Body of pancreas (tissue), 4 donors: ENCODE measurements at regions of chr16 and their contacts with region 1.

Region 1: DNA sequence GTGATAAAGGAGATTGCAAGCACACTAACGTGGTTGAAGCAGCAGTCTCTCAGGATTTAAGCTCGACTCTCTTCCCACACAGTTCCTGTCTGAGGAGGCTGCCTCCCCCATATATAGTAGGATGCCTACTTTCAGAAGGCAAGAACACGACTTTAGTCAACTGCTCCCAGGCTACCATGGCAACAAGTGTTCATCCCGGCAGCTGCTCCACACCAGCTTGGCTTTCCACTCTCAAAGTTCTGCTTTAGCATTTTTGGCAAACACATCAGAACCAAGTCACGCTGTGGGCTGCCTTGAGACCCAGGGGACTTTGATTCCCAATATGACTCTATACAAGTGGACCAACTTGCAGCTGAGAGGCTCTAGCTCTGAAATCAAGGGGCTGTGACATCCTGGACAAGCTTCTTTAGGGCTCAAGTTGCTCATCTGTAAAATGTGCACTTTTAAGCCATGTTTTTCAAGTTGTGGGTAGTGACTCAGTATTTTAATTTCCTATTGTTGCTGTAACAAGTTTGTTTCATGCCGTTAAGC is 16.5 kb downstream of the ZP2 start:
- DNase-seq: no peak
- ATAC-seq: no peak
- H3K4me3 ChIP-seq: no peak overlapping the region
- H3K27ac ChIP-seq: no peak overlapping the region
- H3K4me1 ChIP-seq: no peaks in the 10 kb centered on the region
- H3K27me3 ChIP-seq: no peaks in the 10 kb centered on the region
- CTCF ChIP-seq: no peak
- POLR2A ChIP-seq: no peak

Region 2: GRCh38 chr16:20336955-20337354 is 857.9 kb before region 1 on chr16:
- intact Hi-C with region 1: no loop called
- DNase-seq: peak in 3 of 4 donors; percentile 48 to 61 (median 55)
- ATAC-seq: no peak
- H3K4me3 ChIP-seq: no peak overlapping the region
- H3K27ac ChIP-seq: peak overlapping the region; percentile 39 to 59 (median 48)
- H3K4me1 ChIP-seq: peaks cover 58% of the 10 kb centered on the region
- H3K27me3 ChIP-seq: no peaks in the 10 kb centered on the region
- CTCF ChIP-seq: no peak
- POLR2A ChIP-seq: no peak

Region 3: DNA sequence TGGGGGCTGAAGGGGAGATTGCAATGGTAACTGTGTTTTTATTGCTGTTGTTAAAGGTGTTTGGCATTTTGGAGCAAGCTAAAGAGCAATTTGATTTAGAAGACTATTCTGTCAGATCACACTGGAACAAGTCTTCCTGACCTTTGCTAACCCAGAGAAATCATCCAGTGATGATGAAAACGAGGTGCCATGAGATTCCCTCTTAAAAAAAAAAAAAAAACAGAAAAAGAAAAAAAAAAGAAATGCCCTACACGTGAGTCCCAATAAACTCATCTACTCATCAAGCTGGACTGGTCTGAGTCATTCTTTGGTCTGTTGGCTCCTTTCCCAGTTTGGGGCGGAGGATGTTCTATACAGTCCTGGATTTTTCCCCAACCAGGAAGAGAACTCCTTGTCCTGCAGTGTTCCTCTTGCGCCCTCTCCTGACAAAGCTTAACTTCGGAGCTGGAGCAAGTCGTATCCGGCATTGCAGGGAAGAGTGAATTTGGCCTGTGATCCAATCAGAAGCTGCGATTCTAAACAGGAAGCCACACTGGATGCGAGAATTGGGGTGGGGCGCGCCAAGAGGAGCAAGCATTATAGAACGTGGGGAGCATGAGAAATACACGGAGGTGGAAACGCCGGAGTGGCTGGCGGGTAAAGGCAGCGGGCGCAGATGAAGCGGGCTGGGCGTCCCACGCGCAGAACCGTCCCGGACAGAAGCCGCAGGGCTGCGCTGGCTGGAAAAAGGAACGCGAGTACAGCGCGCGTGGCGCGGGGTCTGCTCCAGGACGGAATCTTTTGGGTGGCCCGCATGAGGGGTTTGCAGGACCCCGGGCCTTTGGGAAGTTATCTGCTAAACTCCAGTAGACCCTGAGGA is 105.7 kb after region 1 on chr16:
- intact Hi-C with region 1: loop called (anchors 5 kb)
- DNase-seq: peak; percentile 96 to 99 (median 98)
- ATAC-seq: peak; percentile 95
- H3K4me3 ChIP-seq: peak overlapping the region; percentile 21 to 36
- H3K27ac ChIP-seq: peak overlapping the region; percentile 64 to 82 (median 72)
- H3K4me1 ChIP-seq: peaks cover 10% of the 10 kb centered on the region
- H3K27me3 ChIP-seq: no peaks in the 10 kb centered on the region
- CTCF ChIP-seq: peak; percentile 66 to 98 (median 96)
- POLR2A ChIP-seq: peak; percentile 9 to 69 (median 55)